Head of caudate nucleus (tissue), 42 donors: ENCODE measurements at regions of chr2 and their contacts with region 1.

Region 1: GRCh38 chr2:178414266-178415247 is 36.4 kb downstream of the PRKRA start:
- DNase-seq: peak; percentile 71 to 93 (median 86)

Region 2: GRCh38 chr2:177942731-177943130 is 471.8 kb before region 1 on chr2:
- intact Hi-C with region 1: no loop called
- DNase-seq: no peak

Region 3: GRCh38 chr2:178112202-178113152 is 302.1 kb before region 1 on chr2 and contains the start of gene RBM45:
- intact Hi-C with region 1: loop called (anchors 5 kb)
- DNase-seq: peak; percentile 74 to 95 (median 90)